Ovary (tissue), 10 donors: ENCODE measurements at regions of chr17 and their contacts with region 1.

Region 1: DNA sequence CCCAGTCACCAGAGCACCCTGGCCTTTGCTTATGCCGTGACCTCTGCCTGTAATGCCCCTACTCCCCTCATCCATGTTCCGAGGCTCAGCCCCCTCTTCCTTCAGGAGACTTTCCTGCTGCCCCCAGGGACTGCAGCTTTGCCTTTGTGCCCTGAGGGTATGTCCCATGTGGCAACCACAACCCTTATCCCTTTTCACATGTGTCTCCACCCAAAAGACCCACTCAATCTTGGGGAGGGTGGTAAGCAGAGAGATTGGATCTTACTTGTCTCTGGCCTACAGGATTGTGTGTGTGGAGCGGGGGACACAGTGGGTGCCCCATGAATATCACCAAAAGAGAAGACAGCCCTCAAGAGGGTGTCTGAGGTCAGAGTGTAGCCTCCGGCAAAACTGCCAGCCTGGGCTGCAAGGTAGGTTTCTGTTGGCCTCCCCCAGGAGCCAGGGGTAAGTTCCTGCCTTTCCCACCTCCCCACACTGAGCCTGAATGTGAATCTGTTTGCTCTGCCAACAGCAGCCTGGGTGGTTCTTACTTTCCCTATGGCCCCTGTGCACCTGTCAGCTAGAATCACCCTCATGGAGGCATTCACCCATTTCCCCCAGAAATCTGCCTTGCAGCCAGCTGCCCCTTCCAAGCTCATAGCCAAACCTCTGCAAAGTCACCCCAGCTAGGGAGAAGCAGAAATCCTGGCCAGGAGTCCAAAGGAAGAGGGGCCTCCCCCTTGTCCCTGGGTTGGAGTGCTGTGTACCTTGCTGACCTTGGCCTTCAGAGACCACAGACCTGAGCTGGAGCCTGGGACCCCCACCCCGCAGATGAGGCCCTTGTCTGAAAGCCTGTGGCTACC is 11.5 kb upstream of the C17orf113 start:
- DNase-seq: no peak
- H3K4me3 ChIP-seq: no peak overlapping the region
- H3K27ac ChIP-seq: no peak overlapping the region
- H3K4me1 ChIP-seq: no peaks in the 10 kb centered on the region
- H3K27me3 ChIP-seq: no peaks in the 10 kb centered on the region
- CTCF ChIP-seq: no peak
- EP300 ChIP-seq: no peak
- POLR2A ChIP-seq: no peak

Region 2: DNA sequence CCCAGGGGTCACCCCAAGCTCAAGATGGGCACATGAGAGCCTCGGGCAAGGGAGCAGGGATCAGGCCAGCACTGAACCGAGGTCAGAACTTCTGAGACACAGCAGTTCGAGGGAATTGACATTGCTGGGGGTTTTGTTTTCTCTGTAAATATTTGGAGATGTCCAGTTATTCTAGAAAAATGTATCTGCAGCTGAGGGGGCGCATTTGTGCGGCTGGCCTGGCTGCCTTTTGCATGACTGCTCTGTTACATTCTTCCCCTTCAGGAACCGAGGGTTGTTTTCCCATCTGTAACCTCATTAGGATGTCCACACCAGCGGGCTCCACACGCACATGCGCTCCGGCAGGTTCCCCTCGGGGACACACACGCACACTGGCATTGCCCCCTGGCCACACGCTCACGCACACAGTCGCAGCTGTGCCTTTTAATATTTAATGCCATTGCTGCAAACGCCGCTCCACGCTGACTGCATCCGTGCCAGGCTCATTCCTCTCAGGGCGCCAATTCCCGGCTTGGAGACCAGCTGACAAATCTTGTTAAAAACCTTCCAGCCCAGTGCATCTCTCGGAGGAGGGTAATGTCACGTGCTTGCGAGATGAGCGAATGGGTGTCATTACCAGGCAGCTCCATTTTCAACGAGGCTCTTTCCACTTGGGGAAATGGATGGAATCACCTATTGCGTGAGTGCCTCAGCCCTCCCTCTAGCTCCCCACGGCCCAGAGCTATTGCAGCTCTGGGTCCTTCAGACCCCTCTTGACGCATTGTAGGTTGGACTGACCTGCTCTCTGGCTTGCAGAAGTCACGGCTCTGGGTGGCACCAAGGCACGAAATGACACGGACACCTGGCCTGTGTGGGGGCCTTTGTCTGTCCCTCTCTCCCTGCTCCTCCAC is 1509.7 kb before region 1 on chr17:
- intact Hi-C with region 1: loop called in 1 of 4 experiments (anchors 5 kb)
- DNase-seq: peak in 4 of 5 donors; percentile 41 to 65 (median 58)
- H3K4me3 ChIP-seq: no peak overlapping the region
- H3K27ac ChIP-seq: peak overlapping the region; percentile 73 to 82
- H3K4me1 ChIP-seq: peaks cover 59% of the 10 kb centered on the region
- H3K27me3 ChIP-seq: no peaks in the 10 kb centered on the region
- CTCF ChIP-seq: no peak
- EP300 ChIP-seq: no peak
- POLR2A ChIP-seq: no peak